Activated CD4-positive, alpha-beta memory T cell treated with anti-CD3 and anti-CD28 coated beads, Interleukin-2, amount 10 ng/mL, durations not matched to agents 7 days and 5 days (primary cell): ENCODE measurements at regions of chr10 and their contacts with region 1.

Region 1: DNA sequence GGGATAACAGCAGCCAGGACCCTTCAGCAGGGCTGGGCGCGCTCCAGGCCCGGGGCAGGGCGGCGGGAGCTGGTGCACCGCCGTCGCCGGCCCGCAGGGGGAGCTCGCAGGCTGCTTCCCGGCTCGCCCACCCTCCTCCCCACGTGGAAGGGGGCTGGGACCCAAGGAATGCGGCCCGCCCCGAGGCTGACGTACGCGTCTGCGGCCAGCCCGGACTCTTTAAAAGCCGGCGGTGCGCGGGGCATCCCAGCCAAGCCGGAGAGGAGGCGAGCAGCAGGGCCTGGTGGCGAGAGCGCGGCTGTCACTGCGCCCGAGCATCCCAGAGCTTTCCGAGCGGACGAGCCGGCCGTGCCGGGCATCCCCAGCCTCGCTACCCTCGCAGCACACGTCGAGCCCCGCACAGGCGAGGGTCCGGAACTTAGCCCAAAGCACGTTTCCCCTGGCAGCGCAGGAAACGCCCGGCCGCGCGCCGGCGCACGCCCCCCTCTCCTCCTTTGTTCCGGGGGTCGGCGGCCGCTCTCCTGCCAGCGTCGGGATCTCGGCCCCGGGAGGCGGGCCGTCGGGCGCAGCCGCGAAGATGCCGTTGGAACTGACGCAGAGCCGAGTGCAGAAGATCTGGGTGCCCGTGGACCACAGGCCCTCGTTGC is at the start of gene PFKFB3:
- DNase-seq: peak; percentile 93
- H3K4me3 Mint-ChIP-seq: peak within 1 kb of the TSS; percentile 96
- H3K27ac Mint-ChIP-seq: peak within 1 kb of the TSS; percentile 91
- H3K4me1 Mint-ChIP-seq: peaks cover 39% of the 10 kb centered on the region
- H3K27me3 Mint-ChIP-seq: peaks cover 2% of the 10 kb centered on the region
- total RNA-seq, gene PFKFB3: 66.8 to 69.4 TPM

Region 2: GRCh38 chr10:6088721-6089390 is 114.0 kb before region 1 on chr10 and contains the start of gene RBM17:
- CTCF ChIA-PET with region 1: interaction called, 12 read pairs
- POLR2A ChIA-PET with region 1: interaction called, 4 read pairs
- DNase-seq: peak; percentile 98
- H3K4me3 Mint-ChIP-seq: peak within 1 kb of the TSS; percentile 96
- H3K27ac Mint-ChIP-seq: peak within 1 kb of the TSS; percentile 54
- H3K4me1 Mint-ChIP-seq: peaks cover 71% of the 10 kb centered on the region
- H3K27me3 Mint-ChIP-seq: no peaks in the 10 kb centered on the region
- total RNA-seq, gene RBM17: 155 to 157 TPM

Region 3: GRCh38 chr10:6144406-6145165 is 58.2 kb before region 1 on chr10:
- CTCF ChIA-PET with region 1: interaction called, 5 read pairs
- POLR2A ChIA-PET with region 1: interaction called, 10 read pairs
- DNase-seq: peak; percentile 92
- H3K4me3 Mint-ChIP-seq: peak overlapping the region; percentile 84
- H3K27ac Mint-ChIP-seq: peak overlapping the region; percentile 73
- H3K4me1 Mint-ChIP-seq: peaks cover 87% of the 10 kb centered on the region
- H3K27me3 Mint-ChIP-seq: peaks cover 2% of the 10 kb centered on the region

Region 4: DNA sequence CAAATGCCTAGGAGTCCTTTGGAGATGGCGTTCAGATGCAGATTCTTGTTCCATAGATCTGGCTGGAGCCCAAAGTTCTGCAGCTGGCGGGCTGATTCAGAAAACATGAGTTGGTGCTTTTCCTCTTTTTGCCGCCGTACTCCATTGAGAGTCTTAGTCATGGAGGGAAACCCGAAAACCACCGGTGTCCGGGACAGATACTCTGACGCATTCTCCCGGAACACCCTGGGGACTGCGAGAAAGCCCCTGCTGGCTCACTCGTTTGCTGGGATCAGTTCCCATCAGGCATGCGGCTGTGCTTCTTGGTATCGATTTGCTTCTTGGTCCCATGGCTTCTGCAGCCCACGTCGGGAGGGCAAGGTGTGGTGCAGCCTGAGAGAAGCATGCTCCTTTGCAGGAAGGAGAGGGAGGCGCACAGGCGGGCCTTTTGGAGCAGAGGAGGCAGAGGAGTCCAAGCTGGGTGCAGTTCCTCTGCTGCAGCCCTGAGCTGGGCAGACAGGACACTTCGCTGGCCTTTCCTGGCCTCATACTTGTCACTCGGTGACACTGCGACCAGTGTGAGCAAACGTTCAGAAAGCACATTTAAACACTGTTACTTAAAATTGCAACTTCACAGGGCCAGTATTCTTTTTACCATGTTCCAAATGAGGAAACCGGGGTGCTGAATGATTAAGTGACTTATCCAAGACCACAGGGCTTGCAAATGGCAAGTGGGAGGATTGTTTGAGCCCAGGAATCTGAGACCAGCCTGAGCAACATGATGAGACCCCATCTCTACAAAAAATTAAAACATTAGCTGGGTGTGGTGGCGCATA is 30.7 kb before region 1 on chr10:
- CTCF ChIA-PET with region 1: interaction called, 91 read pairs
- POLR2A ChIA-PET with region 1: interaction called, 28 read pairs
- DNase-seq: no peak
- H3K4me3 Mint-ChIP-seq: no peak overlapping the region
- H3K27ac Mint-ChIP-seq: peak overlapping the region; percentile 12
- H3K4me1 Mint-ChIP-seq: peaks cover 71% of the 10 kb centered on the region
- H3K27me3 Mint-ChIP-seq: no peaks in the 10 kb centered on the region

Region 5: GRCh38 chr10:6275022-6275997 is 72.5 kb after region 1 on chr10:
- CTCF ChIA-PET with region 1: interaction called, 14 read pairs
- POLR2A ChIA-PET with region 1: interaction called, 9 read pairs
- DNase-seq: peak; percentile 92
- H3K4me3 Mint-ChIP-seq: peak overlapping the region; percentile 60
- H3K27ac Mint-ChIP-seq: peak overlapping the region; percentile 91
- H3K4me1 Mint-ChIP-seq: peaks cover 72% of the 10 kb centered on the region
- H3K27me3 Mint-ChIP-seq: no peaks in the 10 kb centered on the region

Region 6: DNA sequence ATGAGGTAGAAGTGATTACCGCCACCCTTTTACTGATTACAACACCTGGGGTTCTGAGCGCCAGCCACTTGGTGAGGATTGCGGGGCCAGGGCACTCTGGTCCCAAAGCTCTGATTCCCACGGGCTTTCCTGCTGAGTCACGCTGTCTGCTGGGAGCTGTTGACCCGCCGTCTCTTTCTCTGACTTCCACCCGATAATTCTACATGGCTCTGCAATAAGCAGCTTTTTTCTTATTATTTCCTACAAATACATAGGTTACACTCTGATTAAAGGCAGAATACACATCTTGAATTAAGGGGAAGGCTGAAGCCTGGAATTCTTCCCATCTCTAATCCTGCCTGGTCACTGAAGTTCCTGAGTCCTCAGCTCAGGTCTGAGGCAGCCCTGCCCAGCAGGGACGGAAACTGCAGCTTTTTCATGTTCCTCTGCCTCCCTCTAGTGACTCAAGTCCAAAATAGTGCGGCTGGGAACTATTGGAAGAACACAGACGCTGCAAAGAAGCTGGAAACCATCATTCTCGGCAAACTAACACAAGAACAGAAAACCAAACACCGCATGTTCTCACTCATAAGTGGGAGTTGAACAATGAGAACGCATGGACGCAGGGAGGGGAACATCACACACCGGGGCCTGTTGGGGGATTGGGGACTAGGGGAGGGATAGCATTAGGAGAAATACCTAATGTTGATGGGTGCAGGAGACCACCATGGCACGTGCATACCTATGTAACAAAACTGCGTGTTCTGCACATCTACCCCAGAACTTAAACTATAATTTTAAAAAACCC is 198.9 kb after region 1 on chr10:
- CTCF ChIA-PET with region 1: interaction called, 105 read pairs
- POLR2A ChIA-PET with region 1: interaction called, 39 read pairs
- DNase-seq: peak; percentile 63
- H3K4me3 Mint-ChIP-seq: no peak overlapping the region
- H3K27ac Mint-ChIP-seq: no peak overlapping the region
- H3K4me1 Mint-ChIP-seq: peaks cover 30% of the 10 kb centered on the region
- H3K27me3 Mint-ChIP-seq: peaks cover 13% of the 10 kb centered on the region